ENCODE measurements at regions of chr5 and their contacts with region 1.

Region 1: DNA sequence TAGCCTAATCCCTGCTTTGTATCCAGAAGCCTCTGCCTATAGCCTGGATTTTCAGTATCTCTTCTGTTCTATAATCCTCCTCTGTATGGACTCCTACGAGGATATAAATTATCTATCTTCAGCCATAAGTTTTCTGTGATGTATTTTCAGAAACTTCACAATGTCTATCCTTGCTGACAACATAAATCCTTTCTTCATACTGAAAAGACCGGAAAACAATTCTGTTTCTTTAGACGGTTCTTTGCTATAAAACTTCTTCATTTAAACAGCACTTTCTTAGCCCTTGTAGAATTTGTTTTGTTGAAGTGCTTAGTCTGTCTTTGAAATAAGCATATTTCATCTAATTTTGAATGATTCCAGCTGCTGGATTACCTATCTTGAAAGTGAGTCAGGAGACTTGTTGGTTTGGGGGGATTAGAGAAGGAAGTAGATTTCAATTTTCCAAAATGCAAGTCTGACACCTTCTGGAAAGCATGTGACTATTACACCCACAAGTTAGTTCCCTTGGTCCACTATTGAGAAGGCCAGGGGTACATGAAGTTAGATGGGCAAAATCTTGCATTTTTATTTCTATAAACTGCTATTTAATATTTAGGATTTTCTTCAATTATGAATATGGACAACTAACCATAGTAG is 96.3 kb upstream of the RANBP3L start:
- DNase-seq: no peak
- ATAC-seq: peak; percentile 80

Region 2: DNA sequence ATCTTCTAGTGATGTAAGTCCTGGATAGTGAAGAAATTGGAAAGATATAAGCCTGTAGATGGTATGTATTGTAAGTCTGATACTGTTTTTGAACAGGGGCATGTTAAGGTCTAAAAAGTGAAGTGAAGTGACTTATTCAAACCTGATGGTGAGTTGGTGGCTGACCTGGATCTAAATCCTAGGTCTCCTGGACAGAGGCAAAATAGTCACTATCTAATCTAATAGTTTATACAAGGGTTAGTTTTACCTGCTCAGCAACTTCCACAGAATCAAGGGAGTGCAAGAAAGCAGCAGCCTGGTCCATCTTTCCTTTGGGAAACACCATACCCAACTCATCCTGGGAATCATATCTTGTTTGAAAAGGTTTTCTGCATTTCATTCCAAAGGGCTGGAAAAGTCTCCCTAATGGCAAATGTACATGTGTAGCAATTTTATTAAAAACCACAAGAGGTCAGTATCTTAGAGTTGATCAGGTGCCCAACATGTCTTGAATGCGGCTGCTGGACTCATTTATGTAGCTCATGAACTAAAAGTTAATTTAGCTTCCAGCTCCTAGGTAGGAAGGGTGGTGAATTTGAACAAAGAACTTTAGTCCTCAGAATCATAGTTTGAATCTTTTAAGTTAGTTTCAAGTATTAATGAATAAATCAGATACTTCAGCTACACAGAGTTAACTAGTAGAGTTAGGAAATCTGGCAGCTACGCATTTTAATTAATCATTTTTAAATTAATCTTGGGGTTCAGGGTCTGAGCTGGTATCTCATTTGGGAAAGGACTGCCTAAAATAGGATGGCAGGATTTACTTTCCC is 220.1 kb before region 1 on chr5:
- intact Hi-C with region 1: loop called (anchors 5 kb)
- DNase-seq: no peak
- ATAC-seq: peak; percentile 71

Region 3: DNA sequence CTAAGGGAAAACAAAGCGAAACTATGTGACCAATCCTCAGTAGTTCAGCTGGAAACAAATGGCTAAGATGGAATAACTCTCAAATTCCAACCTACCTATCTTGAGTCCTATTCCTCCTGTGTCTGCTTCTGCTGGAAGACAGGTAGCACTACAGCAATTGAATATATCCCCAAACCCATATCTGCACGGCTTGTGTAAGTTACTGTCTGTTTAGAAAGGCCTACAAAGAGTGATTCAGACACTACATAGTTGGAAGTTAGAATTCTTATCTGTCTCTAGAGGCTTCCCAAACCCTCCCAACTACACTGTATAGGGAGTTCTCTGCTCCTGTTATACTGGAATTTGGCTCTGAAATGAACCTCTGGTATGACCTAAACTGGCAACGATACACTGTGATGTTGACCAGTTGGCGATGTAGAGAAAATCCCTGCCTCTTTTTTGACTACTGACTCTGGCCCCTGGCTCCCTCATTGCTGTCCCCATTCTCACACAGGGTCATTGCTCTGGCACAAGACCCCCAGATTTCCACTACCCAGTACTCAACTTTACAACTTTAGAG is 133.7 kb before region 1 on chr5:
- intact Hi-C with region 1: loop called (anchors 10 kb)
- DNase-seq: no peak
- ATAC-seq: no peak